Cardiac septum (tissue), 1 donor: ENCODE measurements at regions of chr10 and their contacts with region 1.

Region 1: DNA sequence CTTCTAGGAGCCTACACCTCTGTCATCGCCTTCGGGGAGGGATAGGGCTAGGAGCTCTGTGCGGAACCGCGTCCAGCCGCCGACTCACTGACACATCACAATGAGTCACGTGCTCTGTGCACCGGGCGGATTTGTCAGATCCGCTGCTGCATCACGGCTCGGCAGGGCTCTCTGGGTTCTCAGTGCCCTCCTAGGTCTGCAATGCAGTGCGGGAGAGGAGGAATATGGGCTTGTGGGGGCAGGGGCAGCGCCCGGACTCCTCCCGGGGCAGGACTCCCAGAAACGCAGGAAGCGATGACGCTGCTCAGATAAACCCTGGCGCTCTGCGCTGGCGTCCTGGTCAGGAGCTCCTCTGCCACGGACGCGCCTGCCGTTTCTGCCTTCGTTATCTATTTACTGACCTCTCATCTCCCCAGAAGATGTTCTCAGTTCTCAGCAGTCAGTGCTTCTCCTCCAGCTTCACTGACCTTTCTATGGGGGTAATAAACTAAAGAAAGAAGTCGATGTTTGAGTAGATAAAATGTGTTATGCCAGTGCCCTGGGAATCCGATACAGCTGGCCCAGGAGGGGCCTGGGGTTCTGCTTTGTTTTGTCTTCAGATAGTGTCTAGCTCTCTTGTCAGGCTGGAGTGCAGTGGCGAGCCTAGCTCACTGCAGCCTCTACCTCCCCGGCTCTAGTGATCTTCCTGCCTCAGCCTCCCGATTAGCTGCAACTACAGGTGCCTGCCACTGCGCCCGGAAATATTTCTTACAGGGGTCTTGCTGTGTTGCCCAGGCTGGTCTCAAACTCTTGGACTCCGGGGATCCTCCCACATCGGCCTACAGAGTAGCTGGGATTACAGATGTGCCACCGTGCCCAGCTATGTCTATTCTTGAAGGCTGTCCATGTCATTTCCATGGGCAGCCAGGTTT is 22.8 kb upstream of the ITGB1 start:
- DNase-seq: peak; percentile 95

Region 2: GRCh38 chr10:32958085-32959005 is 22.5 kb before region 1 on chr10 and contains the start of gene ITGB1:
- intact Hi-C with region 1: loop called (anchors 2 kb)
- DNase-seq: peak; percentile 98
- total RNA-seq, gene ITGB1: 715 TPM

Region 3: DNA sequence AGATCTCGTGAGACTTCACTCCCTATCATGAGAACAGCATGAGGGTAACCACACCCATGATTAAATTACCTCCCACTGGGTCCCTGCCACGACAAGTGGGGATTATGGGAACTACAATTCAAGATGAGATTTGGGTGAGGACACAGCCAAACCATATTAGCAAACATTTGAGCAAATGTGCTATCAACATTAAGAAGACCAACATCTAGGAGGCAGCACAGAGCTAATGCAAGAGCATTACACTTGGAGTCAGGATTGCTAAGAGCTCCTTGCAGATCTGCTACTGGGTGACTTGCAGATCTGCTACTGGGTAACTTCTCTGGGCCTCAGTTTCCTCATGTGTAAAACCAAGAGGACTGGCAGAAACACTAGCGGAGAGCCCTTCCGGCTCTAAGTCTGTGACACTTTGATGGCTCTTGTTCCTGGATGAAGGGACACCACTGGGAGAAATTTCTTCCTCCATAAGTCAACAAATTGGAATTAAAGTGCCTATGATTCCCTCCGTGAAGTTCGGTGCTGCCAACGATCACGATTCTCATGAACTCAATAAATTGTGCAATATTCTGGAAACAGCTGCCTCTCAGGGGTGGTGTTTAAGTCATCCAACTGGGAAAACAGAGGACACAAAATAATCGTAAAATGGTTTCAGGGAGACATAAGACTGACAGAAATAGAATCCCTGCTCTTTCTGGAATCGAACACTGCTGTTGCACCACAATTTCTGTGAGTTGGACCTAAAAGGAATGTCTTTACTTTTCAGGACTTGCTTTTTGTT is 93.0 kb after region 1 on chr10:
- intact Hi-C with region 1: no loop called
- DNase-seq: no peak